T-cell (primary cell): ENCODE measurements at regions of chr19 and their contacts with region 1.

Region 1: GRCh38 chr19:17183858-17184321 is 31.3 kb upstream of the USE1 start:
- DNase-seq: peak in 15 of 35 experiments; percentile 8 to 59 (median 17)
- ATAC-seq: peak; percentile 67 to 77 (median 72)
- H3K4me3 ChIP-seq: peak overlapping the region; percentile 41 to 66
- H3K4me3 Mint-ChIP-seq: peak overlapping the region; percentile 84 to 89 (median 85)
- H3K27ac ChIP-seq: peak overlapping the region; percentile 78
- H3K27ac Mint-ChIP-seq: peak overlapping the region; percentile 98 to 99
- H3K4me1 ChIP-seq: peaks cover 13 to 40% of the 10 kb centered on the region in 2 experiments
- H3K4me1 Mint-ChIP-seq: peaks cover 22 to 28% (median 23%) of the 10 kb centered on the region in 3 donors
- H3K27me3 ChIP-seq: no peaks in the 10 kb centered on the region
- H3K27me3 Mint-ChIP-seq: no peaks in the 10 kb centered on the region

Region 2: GRCh38 chr19:17256130-17256529 is 72.2 kb after region 1 on chr19:
- CTCF ChIA-PET with region 1: no interaction called
- POLR2A ChIA-PET with region 1: interaction called in 1 of 2 experiments, 16 read pairs
- DNase-seq: no peak
- ATAC-seq: no peak
- H3K4me3 ChIP-seq: no peak overlapping the region
- H3K4me3 Mint-ChIP-seq: no peak overlapping the region
- H3K27ac ChIP-seq: no peak overlapping the region
- H3K27ac Mint-ChIP-seq: no peak overlapping the region
- H3K4me1 ChIP-seq: peaks cover 0 to 6% of the 10 kb centered on the region in 2 experiments
- H3K4me1 Mint-ChIP-seq: peaks cover 5 to 6% (median 5%) of the 10 kb centered on the region in 3 donors
- H3K27me3 ChIP-seq: peaks cover 0 to 13% of the 10 kb centered on the region in 2 experiments
- H3K27me3 Mint-ChIP-seq: no peaks in the 10 kb centered on the region